Right cardiac atrium (tissue), 5 donors: ENCODE measurements at regions of chr16 and their contacts with region 1.

Region 1: DNA sequence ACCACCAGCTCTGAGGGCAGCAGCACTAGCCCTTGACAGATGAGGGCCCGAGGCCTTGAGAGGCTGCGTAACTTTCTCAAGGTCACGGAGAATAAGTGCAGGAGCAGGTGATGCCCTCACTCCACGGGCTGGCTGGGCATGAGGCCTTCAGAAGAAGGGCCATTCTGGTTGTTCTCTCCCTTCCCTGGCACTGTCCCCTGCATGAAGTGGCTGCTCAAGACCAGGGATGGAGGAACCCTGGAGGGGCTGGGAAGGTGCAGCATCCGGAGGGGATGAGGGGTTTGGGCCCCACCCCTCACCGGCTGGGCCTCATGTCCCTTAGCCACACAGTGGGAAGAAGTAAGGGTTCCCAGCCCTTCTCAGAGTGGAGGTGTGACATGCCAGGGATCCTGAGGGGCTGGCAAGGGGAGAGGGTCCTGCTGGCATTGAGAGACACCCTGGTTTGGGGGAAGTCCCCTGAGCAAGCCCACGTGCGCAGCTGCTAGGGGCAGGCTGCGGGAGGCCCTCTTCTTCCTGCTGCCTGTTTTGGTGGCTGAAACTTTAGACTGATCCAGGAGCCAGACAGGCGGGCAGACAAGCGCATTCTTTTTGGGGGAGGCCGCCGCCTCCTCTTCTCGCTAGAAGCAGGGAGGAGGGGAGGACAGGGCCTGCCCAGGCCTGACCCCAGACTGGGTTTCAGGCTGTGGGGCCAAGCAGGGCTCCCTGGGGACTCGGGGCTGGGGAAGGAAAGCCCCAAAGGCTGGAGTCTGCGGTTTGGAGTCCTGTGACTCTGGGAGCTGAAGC is 74.0 kb downstream of the N4BP1 start:
- DNase-seq: peak; percentile 72 to 93 (median 89)
- ATAC-seq: peak; percentile 47 to 70
- H3K4me3 ChIP-seq: no peak overlapping the region
- H3K27ac ChIP-seq: peak overlapping the region; percentile 44
- H3K4me1 ChIP-seq: peaks cover 28% of the 10 kb centered on the region
- H3K27me3 ChIP-seq: no peaks in the 10 kb centered on the region

Region 2: GRCh38 chr16:48054881-48055601 is 481.0 kb before region 1 on chr16:
- intact Hi-C with region 1: no loop called
- DNase-seq: peak; percentile 28 to 56 (median 48)
- ATAC-seq: peak; percentile 74 to 80
- H3K4me3 ChIP-seq: no peak overlapping the region
- H3K27ac ChIP-seq: no peak overlapping the region
- H3K4me1 ChIP-seq: peaks cover 3% of the 10 kb centered on the region
- H3K27me3 ChIP-seq: no peaks in the 10 kb centered on the region

Region 3: GRCh38 chr16:48353565-48354163 is 182.4 kb before region 1 on chr16:
- intact Hi-C with region 1: loop called in 3 of 4 experiments (anchors 5 to 10 kb)
- DNase-seq: peak in 2 of 3 donors; percentile 44 to 72
- ATAC-seq: peak; percentile 85 to 86
- H3K4me3 ChIP-seq: no peak overlapping the region
- H3K27ac ChIP-seq: peak overlapping the region; percentile 53
- H3K4me1 ChIP-seq: no peaks in the 10 kb centered on the region
- H3K27me3 ChIP-seq: no peaks in the 10 kb centered on the region

Region 4: GRCh38 chr16:48378836-48379235 is 157.2 kb before region 1 on chr16:
- intact Hi-C with region 1: loop called in 2 of 4 experiments (anchors 5 kb)
- DNase-seq: no peak
- ATAC-seq: peak; percentile 7 to 28
- H3K4me3 ChIP-seq: no peak overlapping the region
- H3K27ac ChIP-seq: no peak overlapping the region
- H3K4me1 ChIP-seq: peaks cover 26% of the 10 kb centered on the region
- H3K27me3 ChIP-seq: no peaks in the 10 kb centered on the region

Region 5: GRCh38 chr16:48384305-48384986 is 151.6 kb before region 1 on chr16:
- intact Hi-C with region 1: loop called in 2 of 4 experiments (anchors 5 kb)
- DNase-seq: peak; percentile 65 to 89 (median 87)
- ATAC-seq: peak; percentile 78 to 79
- H3K4me3 ChIP-seq: peak overlapping the region; percentile 96
- H3K27ac ChIP-seq: peak overlapping the region; percentile 90
- H3K4me1 ChIP-seq: peaks cover 11% of the 10 kb centered on the region
- H3K27me3 ChIP-seq: no peaks in the 10 kb centered on the region

Region 6: DNA sequence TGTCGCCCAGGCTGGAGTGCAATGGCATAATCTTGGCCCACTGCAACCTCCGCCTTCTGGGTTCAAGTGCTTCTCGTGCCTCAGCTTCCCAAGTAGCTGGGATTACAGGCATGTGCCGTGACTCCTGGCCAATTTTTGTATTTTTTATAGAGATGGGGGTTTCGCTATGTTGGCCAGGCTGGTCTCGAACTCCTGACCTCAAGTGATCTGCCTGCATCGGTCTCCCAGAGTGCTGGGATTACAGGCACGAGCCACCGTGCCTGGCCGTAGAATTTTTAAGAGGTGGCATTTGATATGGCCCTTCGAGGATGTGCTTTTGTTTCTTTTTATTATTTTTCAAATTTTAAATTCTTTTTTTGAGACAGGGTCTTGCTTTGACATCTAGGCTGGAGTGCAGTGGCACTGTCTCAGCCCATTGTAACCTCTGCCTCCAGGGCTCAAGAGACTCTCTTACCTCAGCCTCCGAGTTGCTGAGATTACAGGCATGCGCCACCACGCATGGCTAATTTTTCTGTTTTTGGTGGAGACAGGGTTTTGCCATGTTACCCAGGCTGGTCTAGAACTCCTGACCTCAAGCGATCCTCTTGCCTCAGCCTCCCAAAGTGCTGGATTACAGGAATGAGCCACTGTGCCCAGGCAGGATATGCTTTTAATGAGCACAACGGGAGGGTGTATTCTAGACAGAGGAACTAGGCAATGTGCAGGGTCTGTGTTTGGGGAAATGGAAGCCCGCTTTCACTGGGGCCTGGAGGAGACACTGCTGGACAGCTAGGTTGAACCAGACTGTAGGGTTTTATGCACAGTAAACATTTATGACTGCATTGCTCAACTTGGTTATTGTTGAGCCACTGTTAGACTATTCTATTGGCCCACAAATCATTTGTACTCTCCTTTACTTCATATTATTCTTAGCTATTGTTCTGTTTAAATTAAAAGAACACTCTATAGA is 140.9 kb before region 1 on chr16:
- intact Hi-C with region 1: no loop called
- DNase-seq: no peak
- ATAC-seq: peak; percentile 45 to 46
- H3K4me3 ChIP-seq: no peak overlapping the region
- H3K27ac ChIP-seq: no peak overlapping the region
- H3K4me1 ChIP-seq: peaks cover 2% of the 10 kb centered on the region
- H3K27me3 ChIP-seq: no peaks in the 10 kb centered on the region

Region 7: GRCh38 chr16:48790151-48790550 is 254.1 kb after region 1 on chr16:
- intact Hi-C with region 1: no loop called
- DNase-seq: no peak
- ATAC-seq: no peak
- H3K4me3 ChIP-seq: no peak overlapping the region
- H3K27ac ChIP-seq: no peak overlapping the region
- H3K4me1 ChIP-seq: no peaks in the 10 kb centered on the region
- H3K27me3 ChIP-seq: no peaks in the 10 kb centered on the region